ENCODE measurements at regions of chr1 and their contacts with region 1.

Region 1: GRCh38 chr1:203486618-203487370 is 7.2 kb upstream of the OPTC start:
- DNase-seq: no peak
- H3K4me3 ChIP-seq: no peak overlapping the region
- CTCF ChIP-seq: no peak

Region 2: GRCh38 chr1:203351037-203352013 is 135.5 kb before region 1 on chr1 and contains the start of gene FMOD:
- CTCF ChIA-PET with region 1: interaction called, 683 read pairs
- POLR2A ChIA-PET with region 1: no interaction called
- DNase-seq: no peak
- H3K4me3 ChIP-seq: peak within 1 kb of the TSS; percentile 6; the same call in 1 of the 2 replicates
- CTCF ChIP-seq: no peak

Region 3: DNA sequence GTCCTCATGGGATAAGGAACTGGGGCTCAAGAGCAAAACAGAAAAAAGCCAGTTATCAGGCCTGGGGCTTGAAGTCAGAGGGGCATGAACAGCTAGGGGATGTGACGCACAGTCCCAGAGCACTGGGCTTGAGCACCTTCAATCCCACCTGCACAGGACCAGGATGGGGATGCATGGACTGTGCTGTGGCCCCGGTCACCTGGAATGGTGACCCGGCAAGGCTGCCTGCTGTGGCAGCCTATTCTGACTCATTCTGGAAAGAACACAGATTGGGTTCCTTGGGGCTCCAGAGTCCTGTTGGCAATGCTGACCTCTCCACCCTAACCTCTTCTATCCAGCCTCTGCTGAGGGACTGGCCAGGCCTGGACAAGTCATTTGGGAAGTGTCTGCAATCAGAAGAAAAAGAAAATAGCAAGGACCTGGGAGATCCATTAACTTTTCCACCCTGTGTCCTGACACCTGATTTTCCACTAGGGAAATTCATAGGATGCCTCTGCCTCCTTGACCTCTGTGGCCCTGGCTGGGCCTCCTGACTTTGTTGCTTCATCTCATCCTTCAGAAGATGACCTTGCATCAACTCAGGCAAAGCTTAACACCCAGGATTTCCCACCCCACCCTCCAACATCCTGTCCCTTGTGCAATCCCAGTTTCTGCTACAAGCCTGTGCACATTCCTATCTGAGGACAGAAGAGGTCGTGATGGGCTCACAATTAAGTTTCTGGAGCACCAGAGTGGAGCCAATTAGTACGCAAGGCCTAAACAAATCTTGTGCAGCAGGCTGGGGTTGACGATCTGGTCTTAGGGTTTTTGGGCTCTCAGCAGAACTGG is 118.0 kb before region 1 on chr1:
- CTCF ChIA-PET with region 1: interaction called, 57 read pairs
- POLR2A ChIA-PET with region 1: no interaction called
- DNase-seq: peak; percentile 54
- H3K4me3 ChIP-seq: no peak overlapping the region
- CTCF ChIP-seq: peak; percentile 53

Region 4: GRCh38 chr1:203463469-203464062 is 23.2 kb before region 1 on chr1:
- CTCF ChIA-PET with region 1: interaction called, 16 read pairs
- POLR2A ChIA-PET with region 1: interaction called, 3 read pairs
- DNase-seq: no peak
- H3K4me3 ChIP-seq: no peak overlapping the region
- CTCF ChIP-seq: peak; percentile 21

Region 5: GRCh38 chr1:203555076-203555475 is 68.3 kb after region 1 on chr1:
- CTCF ChIA-PET with region 1: no interaction called
- POLR2A ChIA-PET with region 1: no interaction called
- DNase-seq: no peak
- H3K4me3 ChIP-seq: peak overlapping the region; percentile 38
- CTCF ChIP-seq: no peak

Region 6: DNA sequence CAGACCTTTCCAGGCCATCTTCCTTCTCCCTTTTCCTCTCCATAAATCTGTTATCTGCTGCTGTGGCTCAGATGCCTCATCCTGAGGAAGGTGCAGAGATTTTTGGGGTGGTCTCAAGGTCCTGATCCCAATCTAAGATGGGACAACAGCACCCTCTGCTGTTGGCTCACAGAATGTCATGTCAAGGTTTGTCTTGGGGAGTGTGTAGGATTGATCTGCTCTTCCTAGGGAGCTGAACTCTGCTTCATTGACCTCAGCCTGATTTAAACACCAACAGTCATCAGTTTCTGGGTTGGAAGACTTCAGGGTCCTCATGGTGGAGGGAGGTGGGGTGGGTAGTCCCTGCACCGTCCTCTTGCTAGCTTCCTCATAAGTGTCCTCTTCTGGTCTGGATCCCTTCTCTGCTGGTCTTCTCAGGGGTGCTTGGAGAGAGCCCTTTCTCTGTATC is 215.4 kb after region 1 on chr1:
- CTCF ChIA-PET with region 1: interaction called, 28 read pairs
- POLR2A ChIA-PET with region 1: no interaction called
- DNase-seq: no peak
- H3K4me3 ChIP-seq: no peak overlapping the region
- CTCF ChIP-seq: peak; percentile 68